ENCODE measurements at regions of chr11 and their contacts with region 1.

Region 1: GRCh38 chr11:64304316-64305072 is 830 bp upstream of the ESRRA start:
- DNase-seq: peak; percentile 92
- ATAC-seq: peak; percentile 13
- H3K4me3 ChIP-seq: peak overlapping the region; percentile 78 to 88 (median 85)
- H3K4me3 Mint-ChIP-seq: peak overlapping the region; percentile 90
- H3K27ac ChIP-seq: peak overlapping the region; percentile 93 to 94
- H3K27ac Mint-ChIP-seq: peak overlapping the region; percentile 89
- H3K4me1 ChIP-seq: peaks cover 26 to 47% of the 10 kb centered on the region in 2 donors
- H3K4me1 Mint-ChIP-seq: peaks cover 36% of the 10 kb centered on the region
- H3K27me3 ChIP-seq: peaks cover 0 to 32% (median 13%) of the 10 kb centered on the region in 4 experiments
- H3K27me3 Mint-ChIP-seq: peaks cover 13% of the 10 kb centered on the region
- CTCF ChIP-seq: peak; percentile 89

Region 2: GRCh38 chr11:64185816-64186498 is 118.5 kb before region 1 on chr11 and contains the start of gene STIP1:
- CTCF ChIA-PET with region 1: interaction called, 9 read pairs
- POLR2A ChIA-PET with region 1: interaction called, 5 read pairs
- intact Hi-C with region 1: loop called (anchors 1 kb)
- DNase-seq: peak; percentile 100
- ATAC-seq: peak; percentile 85
- H3K4me3 ChIP-seq: peak within 1 kb of the TSS; percentile 16 to 95 (median 83)
- H3K4me3 Mint-ChIP-seq: no peak within 1 kb of the TSS
- H3K27ac ChIP-seq: peak within 1 kb of the TSS; percentile 59 to 86
- H3K27ac Mint-ChIP-seq: peak within 1 kb of the TSS; percentile 94
- H3K4me1 ChIP-seq: peaks cover 13 to 24% of the 10 kb centered on the region in 2 donors
- H3K4me1 Mint-ChIP-seq: peaks cover 40% of the 10 kb centered on the region
- H3K27me3 ChIP-seq: no peaks in the 10 kb centered on the region
- H3K27me3 Mint-ChIP-seq: no peaks in the 10 kb centered on the region
- CTCF ChIP-seq: peak; percentile 37
- total RNA-seq, gene STIP1: 78.7 and 87.8 TPM in 2 replicates

Region 3: DNA sequence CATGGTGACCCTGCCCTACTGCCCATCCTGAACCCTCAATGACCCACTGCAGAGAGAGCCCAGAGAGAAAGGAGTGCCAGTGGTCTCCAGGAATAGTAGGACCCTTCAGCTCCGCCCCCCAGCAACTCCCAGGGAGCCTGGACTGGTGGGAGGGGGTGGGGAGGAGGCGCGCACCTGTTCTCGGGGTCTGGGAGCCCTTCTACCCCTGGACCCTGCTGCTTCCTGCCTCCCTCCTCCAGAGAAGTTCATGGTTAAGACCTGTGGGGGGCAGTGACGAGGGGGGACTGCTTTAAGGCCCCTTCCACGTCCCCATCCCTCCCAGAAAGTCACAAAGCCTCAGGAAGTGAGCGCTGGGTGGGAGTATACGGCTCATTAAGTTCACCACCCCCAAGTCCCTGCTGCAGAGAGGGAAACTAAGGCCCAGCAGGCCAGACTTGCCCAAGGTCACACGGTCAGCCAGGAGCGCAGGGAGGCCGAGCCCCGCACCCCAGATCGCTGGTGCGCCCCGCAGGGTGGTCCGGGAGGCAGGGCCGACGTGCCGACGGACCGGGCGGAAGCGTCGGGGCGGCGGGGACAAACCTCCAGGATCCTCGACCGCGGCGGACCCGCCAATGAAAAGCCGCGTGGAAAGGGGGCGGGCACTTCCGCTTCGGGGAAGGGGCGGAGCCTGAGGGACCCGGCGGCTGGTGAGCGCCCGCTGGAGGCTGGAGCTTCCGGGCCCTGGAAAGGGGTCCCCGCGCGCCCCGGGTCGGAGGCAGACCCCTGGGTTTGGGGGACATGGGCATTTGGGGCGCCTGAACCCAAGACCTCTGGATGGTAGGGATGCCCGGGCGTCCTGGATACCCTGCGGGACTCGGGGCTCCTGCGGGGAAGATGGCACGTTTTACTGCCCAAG is 78.6 kb before region 1 on chr11 and contains the starts of genes NUDT22 and TRPT1:
- CTCF ChIA-PET with region 1: interaction called, 7 read pairs
- POLR2A ChIA-PET with region 1: interaction called, 8 read pairs
- intact Hi-C with region 1: loop called (anchors 1 kb)
- DNase-seq: peak; percentile 91
- ATAC-seq: peak; percentile 53
- H3K4me3 ChIP-seq: peak within 1 kb of the TSS; percentile 64 to 97 (median 92)
- H3K4me3 Mint-ChIP-seq: peak within 1 kb of the TSS; percentile 91
- H3K27ac ChIP-seq: peak within 1 kb of the TSS; percentile 82 to 86
- H3K27ac Mint-ChIP-seq: peak within 1 kb of the TSS; percentile 93
- H3K4me1 ChIP-seq: peaks cover 26 to 41% of the 10 kb centered on the region in 2 donors
- H3K4me1 Mint-ChIP-seq: peaks cover 43% of the 10 kb centered on the region
- H3K27me3 ChIP-seq: no peaks in the 10 kb centered on the region
- H3K27me3 Mint-ChIP-seq: no peaks in the 10 kb centered on the region
- CTCF ChIP-seq: peak; percentile 63
- total RNA-seq, gene NUDT22: 97.2 and 104 TPM in 2 replicates
- total RNA-seq, gene TRPT1: 59.6 and 62.0 TPM in 2 replicates

Region 4: GRCh38 chr11:64246871-64247728 is 57.4 kb before region 1 on chr11 and contains the start of gene PPP1R14B:
- CTCF ChIA-PET with region 1: interaction called, 25 read pairs
- POLR2A ChIA-PET with region 1: no interaction called
- intact Hi-C with region 1: loop called (anchors 1 kb)
- DNase-seq: peak; percentile 85
- ATAC-seq: peak; percentile 60
- H3K4me3 ChIP-seq: peak within 1 kb of the TSS; percentile 78 to 99 (median 88)
- H3K4me3 Mint-ChIP-seq: peak within 1 kb of the TSS; percentile 90
- H3K27ac ChIP-seq: peak within 1 kb of the TSS; percentile 53 to 79
- H3K27ac Mint-ChIP-seq: peak within 1 kb of the TSS; percentile 91
- H3K4me1 ChIP-seq: peaks cover 26 to 54% of the 10 kb centered on the region in 2 donors
- H3K4me1 Mint-ChIP-seq: peaks cover 40% of the 10 kb centered on the region
- H3K27me3 ChIP-seq: no peaks in the 10 kb centered on the region
- H3K27me3 Mint-ChIP-seq: no peaks in the 10 kb centered on the region
- CTCF ChIP-seq: no peak
- total RNA-seq, gene PPP1R14B: 39.2 and 41.2 TPM in 2 replicates

Region 5: GRCh38 chr11:64276653-64277431 is 27.7 kb before region 1 on chr11:
- CTCF ChIA-PET with region 1: interaction called, 73 read pairs
- POLR2A ChIA-PET with region 1: interaction called, 18 read pairs
- intact Hi-C with region 1: no loop called
- DNase-seq: no peak
- ATAC-seq: no peak
- H3K4me3 ChIP-seq: no peak overlapping the region
- H3K4me3 Mint-ChIP-seq: no peak overlapping the region
- H3K27ac ChIP-seq: no peak overlapping the region
- H3K27ac Mint-ChIP-seq: no peak overlapping the region
- H3K4me1 ChIP-seq: peaks cover 2 to 3% of the 10 kb centered on the region in 2 donors
- H3K4me1 Mint-ChIP-seq: peaks cover 2% of the 10 kb centered on the region
- H3K27me3 ChIP-seq: no peaks in the 10 kb centered on the region
- H3K27me3 Mint-ChIP-seq: no peaks in the 10 kb centered on the region
- CTCF ChIP-seq: no peak

Region 6: GRCh38 chr11:64291752-64292459 is 12.6 kb before region 1 on chr11:
- CTCF ChIA-PET with region 1: interaction called, 47 read pairs
- POLR2A ChIA-PET with region 1: no interaction called
- intact Hi-C with region 1: no loop called
- DNase-seq: peak; percentile 61
- ATAC-seq: peak; percentile 35
- H3K4me3 ChIP-seq: peak overlapping the region in 3 of 5 experiments; percentile 32 to 54 (median 45)
- H3K4me3 Mint-ChIP-seq: no peak overlapping the region
- H3K27ac ChIP-seq: no peak overlapping the region
- H3K27ac Mint-ChIP-seq: no peak overlapping the region
- H3K4me1 ChIP-seq: peaks cover 8 to 24% of the 10 kb centered on the region in 2 donors
- H3K4me1 Mint-ChIP-seq: peaks cover 8% of the 10 kb centered on the region
- H3K27me3 ChIP-seq: peaks cover 0 to 58% (median 42%) of the 10 kb centered on the region in 4 experiments
- H3K27me3 Mint-ChIP-seq: peaks cover 38% of the 10 kb centered on the region
- CTCF ChIP-seq: no peak

Region 7: DNA sequence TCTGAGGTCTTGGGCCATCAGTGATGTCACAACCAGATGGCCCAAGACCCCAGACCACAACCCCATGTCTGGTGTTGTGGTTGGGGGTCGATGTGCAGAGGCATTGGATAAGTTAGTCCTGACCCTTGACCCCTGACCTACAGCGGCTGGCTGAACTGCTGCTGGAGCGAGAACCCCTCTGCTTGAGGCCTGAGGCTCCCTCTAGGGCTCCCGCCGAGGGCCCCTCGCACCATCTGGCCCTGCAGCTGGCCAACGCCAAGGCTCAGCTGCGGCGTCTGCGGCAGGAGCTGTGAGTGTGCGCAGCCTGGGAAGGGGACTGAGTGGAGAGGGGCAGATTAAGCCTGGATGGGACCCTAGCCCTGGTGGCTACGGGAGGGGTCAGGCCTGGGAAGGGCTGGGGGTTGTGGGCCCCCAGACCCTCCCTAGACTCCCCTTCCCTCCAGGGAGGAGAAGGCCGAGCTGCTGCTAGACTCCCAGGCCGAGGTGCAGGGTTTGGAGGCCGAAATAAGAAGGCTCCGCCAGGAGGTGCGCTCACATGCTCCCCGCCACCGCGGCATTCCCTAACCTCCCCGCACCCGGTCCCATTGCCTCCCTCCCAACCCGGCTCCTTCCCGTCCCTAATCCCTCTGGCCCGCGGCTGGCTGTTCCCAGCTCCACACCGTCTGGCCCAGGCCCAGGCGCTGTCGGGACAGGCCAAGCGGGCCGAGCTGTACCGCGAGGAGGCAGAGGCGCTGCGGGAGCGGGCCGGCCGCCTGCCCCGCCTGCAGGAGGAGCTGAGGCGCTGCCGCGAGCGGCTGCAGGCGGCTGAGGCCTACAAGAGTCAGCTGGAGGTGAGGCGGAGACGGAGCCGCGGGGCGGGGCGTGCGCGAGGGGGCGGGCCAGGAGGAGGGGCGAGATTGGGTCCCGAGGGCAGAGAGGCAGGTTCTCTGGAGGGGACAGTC is 37.6 kb after region 1 on chr11:
- CTCF ChIA-PET with region 1: interaction called, 14 read pairs
- POLR2A ChIA-PET with region 1: interaction called, 9 read pairs
- intact Hi-C with region 1: loop called (anchors 1 kb)
- DNase-seq: peak; percentile 88
- ATAC-seq: peak; percentile 46
- H3K4me3 ChIP-seq: peak overlapping the region in 2 of 5 experiments; percentile 15 to 19
- H3K4me3 Mint-ChIP-seq: peak overlapping the region; percentile 89
- H3K27ac ChIP-seq: peak overlapping the region in 1 of 2 donors; percentile 12
- H3K27ac Mint-ChIP-seq: no peak overlapping the region
- H3K4me1 ChIP-seq: peaks cover 30 to 39% of the 10 kb centered on the region in 2 donors
- H3K4me1 Mint-ChIP-seq: peaks cover 50% of the 10 kb centered on the region
- H3K27me3 ChIP-seq: no peaks in the 10 kb centered on the region
- H3K27me3 Mint-ChIP-seq: no peaks in the 10 kb centered on the region
- CTCF ChIP-seq: peak; percentile 43

Measured in B cell (primary cell).